CD4-positive, alpha-beta memory T cell (primary cell): ENCODE measurements at regions of chr5 and their contacts with region 1.

Region 1: DNA sequence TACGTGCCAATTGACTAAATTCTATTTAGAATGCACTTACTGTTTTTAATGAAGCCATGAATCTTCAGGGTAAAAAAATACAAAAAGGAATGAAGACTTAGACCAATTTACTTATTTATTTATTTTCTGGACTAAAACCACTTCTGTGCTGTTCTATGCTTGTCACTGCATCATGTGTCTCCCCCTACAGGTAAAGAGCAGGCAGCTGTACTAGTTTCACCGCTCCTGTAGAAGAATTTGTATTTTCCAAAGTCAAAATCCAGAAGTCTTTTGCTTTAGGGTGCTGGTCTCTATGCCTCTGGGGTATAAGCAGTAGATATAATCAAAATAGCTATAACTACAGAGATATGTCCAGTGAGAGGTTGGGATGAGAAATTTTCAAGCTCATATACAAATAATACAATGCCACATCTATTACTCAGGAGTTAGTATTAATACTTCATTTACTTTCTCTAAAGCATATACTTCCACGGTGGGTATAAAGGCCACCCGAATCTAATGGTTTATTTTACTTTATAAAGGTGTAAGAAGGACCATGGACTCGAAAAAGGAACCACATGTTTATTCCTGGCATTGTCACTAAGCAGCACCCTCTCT is 591.5 kb downstream of the RAB3C start:
- DNase-seq: peak; percentile 51 to 67 (median 57)
- H3K4me3 ChIP-seq: no peak overlapping the region
- H3K4me3 Mint-ChIP-seq: no peak overlapping the region
- H3K27ac ChIP-seq: no peak overlapping the region
- H3K27ac Mint-ChIP-seq: peak overlapping the region in 2 of 7 donors; percentile 5 to 12
- H3K4me1 ChIP-seq: no peaks in the 10 kb centered on the region
- H3K4me1 Mint-ChIP-seq: peaks cover 0 to 4% (median under 1%) of the 10 kb centered on the region in 4 donors
- H3K27me3 ChIP-seq: no peaks in the 10 kb centered on the region
- H3K27me3 Mint-ChIP-seq: no peaks in the 10 kb centered on the region

Region 2: GRCh38 chr5:58958701-58959100 is 215.6 kb before region 1 on chr5:
- CTCF ChIA-PET with region 1: no interaction called
- POLR2A ChIA-PET with region 1: no interaction called
- intact Hi-C with region 1: no loop called
- DNase-seq: no peak
- H3K4me3 ChIP-seq: no peak overlapping the region
- H3K4me3 Mint-ChIP-seq: no peak overlapping the region
- H3K27ac ChIP-seq: no peak overlapping the region
- H3K27ac Mint-ChIP-seq: no peak overlapping the region
- H3K4me1 ChIP-seq: no peaks in the 10 kb centered on the region
- H3K4me1 Mint-ChIP-seq: no peaks in the 10 kb centered on the region
- H3K27me3 ChIP-seq: no peaks in the 10 kb centered on the region
- H3K27me3 Mint-ChIP-seq: peaks cover 0 to 2% of the 10 kb centered on the region in 2 donors

Region 3: DNA sequence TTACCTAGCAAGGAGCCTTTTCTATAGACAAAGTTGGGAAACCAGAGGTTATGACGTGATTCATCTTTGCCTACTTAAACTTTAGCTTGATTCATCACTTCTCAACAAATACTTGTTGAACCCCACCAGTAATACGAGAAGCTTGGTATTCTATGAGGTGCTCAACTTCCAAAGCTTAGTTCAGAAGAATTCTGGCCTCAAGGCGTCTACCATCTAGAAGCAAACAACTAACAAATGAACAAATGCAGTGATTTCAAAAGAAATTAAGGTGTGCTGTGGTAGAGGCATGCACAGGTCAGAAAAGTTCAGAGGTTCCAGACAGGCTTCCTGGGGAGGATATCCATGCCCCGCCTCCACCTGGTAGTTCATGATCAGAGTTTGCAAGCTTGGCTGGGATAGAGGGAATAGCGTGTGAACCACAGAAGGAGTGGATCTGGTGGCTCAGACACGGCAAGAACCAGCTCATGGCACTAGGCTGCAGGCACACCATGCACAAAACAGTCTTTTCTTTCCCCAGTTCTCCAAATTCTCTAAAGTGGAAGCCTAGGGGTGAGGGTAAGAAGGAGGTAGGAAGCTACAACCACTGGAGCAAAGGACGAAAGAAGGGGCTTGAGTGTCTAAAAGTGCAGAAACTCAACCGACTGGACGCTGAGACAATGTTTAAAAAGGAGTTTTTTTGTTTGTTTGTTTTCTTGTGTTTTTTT is 118.4 kb before region 1 on chr5:
- CTCF ChIA-PET with region 1: interaction called, 10 read pairs
- POLR2A ChIA-PET with region 1: no interaction called
- intact Hi-C with region 1: no loop called
- DNase-seq: no peak
- H3K4me3 ChIP-seq: no peak overlapping the region
- H3K4me3 Mint-ChIP-seq: no peak overlapping the region
- H3K27ac ChIP-seq: no peak overlapping the region
- H3K27ac Mint-ChIP-seq: no peak overlapping the region
- H3K4me1 ChIP-seq: no peaks in the 10 kb centered on the region
- H3K4me1 Mint-ChIP-seq: no peaks in the 10 kb centered on the region
- H3K27me3 ChIP-seq: no peaks in the 10 kb centered on the region
- H3K27me3 Mint-ChIP-seq: no peaks in the 10 kb centered on the region

Region 4: DNA sequence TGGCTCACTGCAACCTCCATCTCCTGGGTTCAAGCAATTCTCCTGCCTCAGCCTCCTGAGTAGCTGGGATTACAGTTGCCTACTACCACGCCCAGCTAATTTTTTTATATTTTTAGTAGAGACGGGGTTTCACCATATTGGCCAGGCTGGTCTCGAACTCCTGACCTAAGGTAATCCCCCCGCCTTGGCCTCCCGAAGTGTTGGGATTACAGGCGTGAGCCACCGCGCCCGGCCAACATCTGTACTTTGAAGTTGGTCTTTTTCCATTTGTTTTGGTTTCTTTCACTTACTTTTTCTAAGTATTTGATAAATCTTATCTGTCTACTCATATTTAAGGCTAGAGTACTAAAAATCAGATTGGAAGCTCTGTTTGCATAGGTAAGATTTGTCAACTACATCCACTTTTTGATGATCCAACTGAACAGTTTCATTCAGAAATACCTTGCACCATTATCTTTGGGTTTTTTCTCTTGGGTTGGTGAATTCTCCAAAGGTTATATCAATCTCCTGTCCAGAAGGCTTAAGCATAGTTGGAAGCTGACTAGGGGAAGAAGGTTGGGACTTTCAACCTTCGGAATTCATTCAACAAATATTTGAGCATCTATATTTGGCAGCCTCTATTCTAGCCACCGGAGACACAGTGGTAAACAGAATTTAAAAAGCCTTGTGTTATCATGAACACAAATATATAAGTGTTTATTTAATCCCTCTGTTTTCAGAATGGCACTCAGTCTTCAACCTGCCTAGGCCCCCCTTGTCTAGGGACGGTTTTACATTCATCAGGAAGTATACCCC is 102.4 kb before region 1 on chr5:
- CTCF ChIA-PET with region 1: interaction called, 17 read pairs
- POLR2A ChIA-PET with region 1: no interaction called
- intact Hi-C with region 1: no loop called
- DNase-seq: no peak
- H3K4me3 ChIP-seq: no peak overlapping the region
- H3K4me3 Mint-ChIP-seq: no peak overlapping the region
- H3K27ac ChIP-seq: no peak overlapping the region
- H3K27ac Mint-ChIP-seq: no peak overlapping the region
- H3K4me1 ChIP-seq: no peaks in the 10 kb centered on the region
- H3K4me1 Mint-ChIP-seq: no peaks in the 10 kb centered on the region
- H3K27me3 ChIP-seq: no peaks in the 10 kb centered on the region
- H3K27me3 Mint-ChIP-seq: peaks cover 3 to 6% of the 10 kb centered on the region in 2 donors

Region 5: GRCh38 chr5:59126708-59127573 is 47.4 kb before region 1 on chr5:
- CTCF ChIA-PET with region 1: interaction called, 35 read pairs
- POLR2A ChIA-PET with region 1: interaction called, 25 read pairs
- intact Hi-C with region 1: loop called (anchors 1 kb)
- DNase-seq: peak in 1 of 5 donors; percentile 36
- H3K4me3 ChIP-seq: peak overlapping the region; percentile 19 to 34
- H3K4me3 Mint-ChIP-seq: no peak overlapping the region
- H3K27ac ChIP-seq: peak overlapping the region; percentile 80
- H3K27ac Mint-ChIP-seq: no peak overlapping the region
- H3K4me1 ChIP-seq: peaks cover 76% of the 10 kb centered on the region
- H3K4me1 Mint-ChIP-seq: peaks cover 0 to 17% (median 7%) of the 10 kb centered on the region in 4 donors
- H3K27me3 ChIP-seq: no peaks in the 10 kb centered on the region
- H3K27me3 Mint-ChIP-seq: no peaks in the 10 kb centered on the region

Region 6: GRCh38 chr5:59133682-59134261 is 40.6 kb before region 1 on chr5:
- CTCF ChIA-PET with region 1: interaction called, 32 read pairs
- POLR2A ChIA-PET with region 1: interaction called, 7 read pairs
- intact Hi-C with region 1: no loop called
- DNase-seq: no peak
- H3K4me3 ChIP-seq: no peak overlapping the region
- H3K4me3 Mint-ChIP-seq: peak overlapping the region in 1 of 8 donors; percentile 43
- H3K27ac ChIP-seq: no peak overlapping the region
- H3K27ac Mint-ChIP-seq: peak overlapping the region in 6 of 7 donors; percentile 59 to 95 (median 86)
- H3K4me1 ChIP-seq: peaks cover 34% of the 10 kb centered on the region
- H3K4me1 Mint-ChIP-seq: peaks cover 10 to 45% (median 13%) of the 10 kb centered on the region in 4 donors
- H3K27me3 ChIP-seq: no peaks in the 10 kb centered on the region
- H3K27me3 Mint-ChIP-seq: peaks cover 0 to 2% of the 10 kb centered on the region in 2 donors

Region 7: DNA sequence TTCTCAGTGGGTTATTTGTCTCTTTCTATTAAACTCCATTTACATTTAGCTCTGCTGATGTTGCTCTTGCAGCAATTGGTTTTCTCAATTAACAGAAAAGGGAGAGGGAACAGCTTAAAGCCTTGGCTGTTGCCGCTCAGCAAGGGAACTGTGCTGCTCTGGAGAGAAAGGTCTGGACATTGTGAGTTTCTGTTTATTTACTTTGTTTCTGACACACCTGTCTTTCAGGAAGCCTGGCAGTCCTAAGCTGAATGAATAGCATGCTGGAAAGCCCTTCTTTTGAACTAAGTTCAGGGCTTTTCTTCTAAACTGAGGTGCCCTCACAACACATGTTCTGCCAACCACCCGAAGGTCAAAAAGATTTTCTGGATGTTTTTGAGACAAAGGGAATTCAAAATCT is 227.3 kb after region 1 on chr5:
- CTCF ChIA-PET with region 1: no interaction called
- POLR2A ChIA-PET with region 1: no interaction called
- intact Hi-C with region 1: no loop called
- DNase-seq: no peak
- H3K4me3 ChIP-seq: no peak overlapping the region
- H3K4me3 Mint-ChIP-seq: no peak overlapping the region
- H3K27ac ChIP-seq: no peak overlapping the region
- H3K27ac Mint-ChIP-seq: no peak overlapping the region
- H3K4me1 ChIP-seq: no peaks in the 10 kb centered on the region
- H3K4me1 Mint-ChIP-seq: no peaks in the 10 kb centered on the region
- H3K27me3 ChIP-seq: no peaks in the 10 kb centered on the region
- H3K27me3 Mint-ChIP-seq: peaks cover 2 to 3% of the 10 kb centered on the region in 2 donors